ENCODE measurements at regions of chr5 and their contacts with region 1.

Region 1: GRCh38 chr5:148826053-148826738 is at the start of gene ADRB2:
- DNase-seq: peak; percentile 94
- ATAC-seq: peak; percentile 89
- H3K4me3 ChIP-seq: peak within 1 kb of the TSS; percentile 61 to 91 (median 86)
- H3K4me3 Mint-ChIP-seq: peak within 1 kb of the TSS; percentile 94
- H3K27ac ChIP-seq: peak within 1 kb of the TSS; percentile 76 to 91
- H3K27ac Mint-ChIP-seq: peak within 1 kb of the TSS; percentile 94
- H3K4me1 ChIP-seq: peaks cover 54 to 57% of the 10 kb centered on the region in 2 donors
- H3K4me1 Mint-ChIP-seq: peaks cover 74% of the 10 kb centered on the region
- H3K27me3 ChIP-seq: no peaks in the 10 kb centered on the region
- H3K27me3 Mint-ChIP-seq: no peaks in the 10 kb centered on the region
- CTCF ChIP-seq: no peak
- total RNA-seq, gene ADRB2: 11.4 and 12.4 TPM in 2 replicates

Region 2: GRCh38 chr5:148383564-148384379 is 442.4 kb before region 1 on chr5 and contains the start of gene FBXO38:
- CTCF ChIA-PET with region 1: no interaction called
- POLR2A ChIA-PET with region 1: no interaction called
- intact Hi-C with region 1: loop called (anchors 5 kb)
- DNase-seq: peak; percentile 99
- ATAC-seq: peak; percentile 98
- H3K4me3 ChIP-seq: peak within 1 kb of the TSS; percentile 69 to 94 (median 87)
- H3K4me3 Mint-ChIP-seq: peak within 1 kb of the TSS; percentile 88
- H3K27ac ChIP-seq: peak within 1 kb of the TSS; percentile 92 to 96
- H3K27ac Mint-ChIP-seq: peak within 1 kb of the TSS; percentile 92
- H3K4me1 ChIP-seq: peaks cover 24 to 26% of the 10 kb centered on the region in 2 donors
- H3K4me1 Mint-ChIP-seq: peaks cover 51% of the 10 kb centered on the region
- H3K27me3 ChIP-seq: no peaks in the 10 kb centered on the region
- H3K27me3 Mint-ChIP-seq: no peaks in the 10 kb centered on the region
- CTCF ChIP-seq: peak; percentile 24
- total RNA-seq, gene FBXO38: 97.0 and 124 TPM in 2 replicates

Region 3: GRCh38 chr5:148774313-148774712 is 51.9 kb before region 1 on chr5:
- CTCF ChIA-PET with region 1: no interaction called
- POLR2A ChIA-PET with region 1: no interaction called
- intact Hi-C with region 1: no loop called
- DNase-seq: no peak
- ATAC-seq: no peak
- H3K4me3 ChIP-seq: no peak overlapping the region
- H3K4me3 Mint-ChIP-seq: no peak overlapping the region
- H3K27ac ChIP-seq: no peak overlapping the region
- H3K27ac Mint-ChIP-seq: no peak overlapping the region
- H3K4me1 ChIP-seq: peaks cover 9 to 12% of the 10 kb centered on the region in 2 donors
- H3K4me1 Mint-ChIP-seq: peaks cover 14% of the 10 kb centered on the region
- H3K27me3 ChIP-seq: peaks cover 0 to 3% (median 0%) of the 10 kb centered on the region in 4 experiments
- H3K27me3 Mint-ChIP-seq: no peaks in the 10 kb centered on the region
- CTCF ChIP-seq: no peak

Region 4: GRCh38 chr5:148788636-148789035 is 37.6 kb before region 1 on chr5:
- CTCF ChIA-PET with region 1: no interaction called
- POLR2A ChIA-PET with region 1: no interaction called
- intact Hi-C with region 1: no loop called
- DNase-seq: no peak
- ATAC-seq: no peak
- H3K4me3 ChIP-seq: no peak overlapping the region
- H3K4me3 Mint-ChIP-seq: no peak overlapping the region
- H3K27ac ChIP-seq: no peak overlapping the region
- H3K27ac Mint-ChIP-seq: no peak overlapping the region
- H3K4me1 ChIP-seq: peaks cover 2 to 4% of the 10 kb centered on the region in 2 donors
- H3K4me1 Mint-ChIP-seq: peaks cover 9% of the 10 kb centered on the region
- H3K27me3 ChIP-seq: no peaks in the 10 kb centered on the region
- H3K27me3 Mint-ChIP-seq: peaks cover 5% of the 10 kb centered on the region
- CTCF ChIP-seq: no peak

Region 5: GRCh38 chr5:149828161-149828884 is 1002.1 kb after region 1 on chr5:
- CTCF ChIA-PET with region 1: no interaction called
- POLR2A ChIA-PET with region 1: no interaction called
- intact Hi-C with region 1: no loop called
- DNase-seq: peak; percentile 85
- ATAC-seq: peak; percentile 59
- H3K4me3 ChIP-seq: no peak overlapping the region
- H3K4me3 Mint-ChIP-seq: no peak overlapping the region
- H3K27ac ChIP-seq: no peak overlapping the region
- H3K27ac Mint-ChIP-seq: no peak overlapping the region
- H3K4me1 ChIP-seq: no peaks in the 10 kb centered on the region
- H3K4me1 Mint-ChIP-seq: peaks cover 6% of the 10 kb centered on the region
- H3K27me3 ChIP-seq: no peaks in the 10 kb centered on the region
- H3K27me3 Mint-ChIP-seq: no peaks in the 10 kb centered on the region
- CTCF ChIP-seq: peak; percentile 92